IMR-90 (cell line): ENCODE measurements at regions of chr10 and their contacts with region 1.

Region 1: DNA sequence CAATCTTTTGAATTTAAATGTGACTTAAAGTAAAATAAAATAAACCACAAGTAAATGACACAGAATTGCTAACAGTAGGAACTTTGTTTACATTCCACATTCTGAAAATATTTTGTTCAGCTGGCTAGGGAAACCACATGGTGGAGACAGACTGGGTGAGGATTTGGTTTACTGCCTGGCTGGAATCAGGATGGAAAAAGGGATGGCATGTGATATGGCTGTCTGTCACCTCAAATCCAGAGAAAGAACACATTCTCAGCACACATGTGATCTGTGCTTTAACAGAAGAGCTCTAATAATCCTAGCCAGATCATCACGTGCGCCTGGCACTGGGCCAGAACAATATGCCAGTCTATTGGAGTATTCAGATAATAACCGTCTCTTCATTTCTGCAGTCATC is 90.9 kb upstream of the PIP4K2A start:
- DNase-seq: peak; percentile 58
- ATAC-seq: peak; percentile 82
- H3K4me3 ChIP-seq: no peak overlapping the region
- H3K27ac ChIP-seq: no peak overlapping the region
- H3K4me1 ChIP-seq: peaks cover 12% of the 10 kb centered on the region
- H3K27me3 ChIP-seq: no peaks in the 10 kb centered on the region
- CTCF ChIP-seq: peak; percentile 15; the same call in 1 of the 2 replicates
- POLR2A ChIP-seq: no peak
- RAD21 ChIP-seq: 0 out of 2 replicates have a peak, but pooled peaks have one; percentile 28

Region 2: DNA sequence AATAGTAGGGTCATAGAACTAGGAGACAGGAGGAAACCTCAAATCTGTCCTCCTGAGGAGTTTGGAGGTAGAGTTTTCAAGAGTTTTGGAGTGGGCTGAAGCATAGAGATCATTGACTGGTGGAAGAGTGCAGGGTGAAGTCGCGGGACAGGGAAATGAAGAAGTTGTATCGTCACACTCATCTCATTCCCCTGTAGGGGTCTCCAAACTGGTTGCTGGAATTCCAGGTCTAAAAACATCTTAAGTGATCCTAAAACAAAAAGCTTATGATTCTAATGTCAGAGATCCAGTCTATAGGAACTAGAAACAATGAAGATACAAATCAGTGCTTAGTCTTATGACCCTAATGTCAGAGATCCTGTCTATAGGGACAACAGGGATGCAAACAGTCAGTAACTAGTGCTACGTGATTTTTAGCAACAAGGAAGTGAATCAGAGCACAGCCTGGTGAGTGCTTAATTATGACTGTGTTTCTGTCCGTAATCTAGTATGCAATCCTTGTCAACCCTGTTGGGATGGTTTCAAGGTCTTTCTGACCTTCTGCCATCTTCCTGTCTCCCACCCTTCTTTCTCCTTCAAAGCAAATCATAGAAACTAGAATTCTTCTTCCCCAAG is 1419.2 kb before region 1 on chr10:
- CTCF ChIA-PET with region 1: no interaction called
- POLR2A ChIA-PET with region 1: interaction called, 12 read pairs
- dilution Hi-C with region 1: no loop called
- in situ Hi-C with region 1: no loop called
- intact Hi-C with region 1: no loop called
- DNase-seq: no peak
- ATAC-seq: no peak
- H3K4me3 ChIP-seq: no peak overlapping the region
- H3K27ac ChIP-seq: no peak overlapping the region
- H3K4me1 ChIP-seq: no peaks in the 10 kb centered on the region
- H3K27me3 ChIP-seq: no peaks in the 10 kb centered on the region
- CTCF ChIP-seq: no peak
- POLR2A ChIP-seq: no peak
- RAD21 ChIP-seq: no peak

Region 3: GRCh38 chr10:22597138-22597537 is 208.1 kb before region 1 on chr10:
- CTCF ChIA-PET with region 1: no interaction called
- POLR2A ChIA-PET with region 1: no interaction called
- dilution Hi-C with region 1: no loop called
- in situ Hi-C with region 1: loop called (anchors 25 kb)
- intact Hi-C with region 1: loop called (anchors 10 kb)
- DNase-seq: peak; percentile 26
- ATAC-seq: peak; percentile 44
- H3K4me3 ChIP-seq: no peak overlapping the region
- H3K27ac ChIP-seq: no peak overlapping the region
- H3K4me1 ChIP-seq: peaks cover 15% of the 10 kb centered on the region
- H3K27me3 ChIP-seq: no peaks in the 10 kb centered on the region
- CTCF ChIP-seq: no peak
- POLR2A ChIP-seq: no peak
- RAD21 ChIP-seq: no peak